ENCODE measurements at regions of chr3 and their contacts with region 1.

Region 1: DNA sequence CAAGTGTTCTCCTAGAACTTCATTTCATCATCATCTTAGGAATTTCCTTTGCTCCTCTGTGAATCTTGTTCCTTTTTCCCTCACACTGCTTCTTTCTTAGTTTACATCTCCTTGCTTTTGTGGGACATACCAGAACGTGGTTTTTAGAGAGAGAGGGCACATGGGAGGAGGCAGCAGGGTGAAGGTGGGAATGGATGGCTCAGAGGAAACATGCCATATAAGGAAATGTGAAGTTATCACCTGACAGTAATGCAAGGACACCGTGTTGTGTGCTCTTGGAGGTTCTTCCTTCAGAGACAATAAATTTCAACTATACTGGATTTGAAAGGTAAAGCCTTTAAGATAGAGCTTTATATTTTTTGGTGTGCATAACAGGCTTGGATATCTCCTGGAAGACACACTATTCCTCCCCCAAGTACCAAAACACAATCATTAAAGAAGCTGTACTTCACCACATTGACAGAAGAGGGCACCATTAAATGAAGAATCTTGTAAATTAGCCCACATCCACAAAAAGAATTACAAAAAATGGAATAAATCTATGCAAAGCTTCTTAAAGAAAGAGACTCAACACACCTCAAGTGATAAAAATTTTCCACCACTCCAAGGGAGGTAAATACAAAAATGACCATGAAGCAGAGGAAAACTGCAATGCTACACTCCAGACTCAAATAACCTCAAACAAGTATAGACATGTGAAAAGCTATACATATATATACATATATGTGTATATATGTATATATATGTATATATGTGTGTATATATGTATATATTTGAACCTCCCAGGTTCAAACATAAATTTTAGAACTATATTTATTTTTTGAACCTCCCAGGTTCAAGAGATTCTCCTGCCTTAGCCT is 26.1 kb downstream of the RPL39L start:
- DNase-seq: peak in 2 of 5 donors; percentile 24 to 47
- H3K4me3 ChIP-seq: no peak overlapping the region
- H3K4me3 Mint-ChIP-seq: no peak overlapping the region
- H3K27ac ChIP-seq: no peak overlapping the region
- H3K27ac Mint-ChIP-seq: no peak overlapping the region
- H3K4me1 ChIP-seq: no peaks in the 10 kb centered on the region
- H3K4me1 Mint-ChIP-seq: peaks cover 3 to 8% (median 7%) of the 10 kb centered on the region in 3 donors
- H3K27me3 ChIP-seq: no peaks in the 10 kb centered on the region
- H3K27me3 Mint-ChIP-seq: peaks cover 0 to 4% of the 10 kb centered on the region in 2 donors

Region 2: GRCh38 chr3:187101184-187102072 is 11.7 kb before region 1 on chr3:
- CTCF ChIA-PET with region 1: interaction called, 20 read pairs
- POLR2A ChIA-PET with region 1: no interaction called
- DNase-seq: peak; percentile 27 to 68 (median 40)
- H3K4me3 ChIP-seq: peak overlapping the region; percentile 43
- H3K4me3 Mint-ChIP-seq: peak overlapping the region; percentile 17 to 86 (median 74)
- H3K27ac ChIP-seq: no peak overlapping the region
- H3K27ac Mint-ChIP-seq: peak overlapping the region; percentile 11 to 89 (median 56)
- H3K4me1 ChIP-seq: peaks cover 18% of the 10 kb centered on the region
- H3K4me1 Mint-ChIP-seq: peaks cover 17 to 40% (median 27%) of the 10 kb centered on the region in 3 donors
- H3K27me3 ChIP-seq: no peaks in the 10 kb centered on the region
- H3K27me3 Mint-ChIP-seq: no peaks in the 10 kb centered on the region

Region 3: GRCh38 chr3:187130346-187131066 is 17.3 kb after region 1 on chr3:
- CTCF ChIA-PET with region 1: interaction called, 17 read pairs
- POLR2A ChIA-PET with region 1: no interaction called
- DNase-seq: peak in 4 of 5 donors; percentile 20 to 81 (median 67)
- H3K4me3 ChIP-seq: peak overlapping the region; percentile 44
- H3K4me3 Mint-ChIP-seq: peak overlapping the region; percentile 2 to 80 (median 74)
- H3K27ac ChIP-seq: peak overlapping the region; percentile 68
- H3K27ac Mint-ChIP-seq: peak overlapping the region; percentile 93 to 99 (median 98)
- H3K4me1 ChIP-seq: peaks cover 24% of the 10 kb centered on the region
- H3K4me1 Mint-ChIP-seq: peaks cover 25 to 51% (median 28%) of the 10 kb centered on the region in 3 donors
- H3K27me3 ChIP-seq: no peaks in the 10 kb centered on the region
- H3K27me3 Mint-ChIP-seq: no peaks in the 10 kb centered on the region

Region 4: DNA sequence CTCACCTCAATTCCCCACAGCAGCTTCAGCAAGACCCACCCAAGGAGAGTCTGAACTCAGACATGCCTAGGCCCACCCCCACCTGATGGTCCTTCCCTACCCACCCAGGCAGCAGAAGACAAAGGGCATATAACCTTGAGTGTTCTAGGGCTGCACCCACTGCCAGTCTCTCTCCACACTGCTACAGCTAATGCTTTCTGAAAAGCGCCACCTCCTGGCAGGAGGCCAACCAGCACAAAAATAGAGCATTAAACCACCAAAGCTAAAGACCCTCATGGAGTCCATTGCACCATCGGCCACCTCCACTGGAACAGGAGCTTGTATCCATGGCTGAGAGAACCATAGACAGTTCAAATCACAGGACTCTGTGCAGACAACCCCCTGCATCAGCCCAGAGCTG is 37.4 kb after region 1 on chr3:
- CTCF ChIA-PET with region 1: interaction called, 81 read pairs
- POLR2A ChIA-PET with region 1: interaction called, 5 read pairs
- DNase-seq: peak; percentile 47 to 79 (median 56)
- H3K4me3 ChIP-seq: no peak overlapping the region
- H3K4me3 Mint-ChIP-seq: no peak overlapping the region
- H3K27ac ChIP-seq: no peak overlapping the region
- H3K27ac Mint-ChIP-seq: peak overlapping the region in 1 of 8 donors; percentile 54
- H3K4me1 ChIP-seq: no peaks in the 10 kb centered on the region
- H3K4me1 Mint-ChIP-seq: peaks cover 0 to 5% (median 4%) of the 10 kb centered on the region in 3 donors
- H3K27me3 ChIP-seq: no peaks in the 10 kb centered on the region
- H3K27me3 Mint-ChIP-seq: peaks cover 19 to 27% of the 10 kb centered on the region in 2 donors

Region 5: DNA sequence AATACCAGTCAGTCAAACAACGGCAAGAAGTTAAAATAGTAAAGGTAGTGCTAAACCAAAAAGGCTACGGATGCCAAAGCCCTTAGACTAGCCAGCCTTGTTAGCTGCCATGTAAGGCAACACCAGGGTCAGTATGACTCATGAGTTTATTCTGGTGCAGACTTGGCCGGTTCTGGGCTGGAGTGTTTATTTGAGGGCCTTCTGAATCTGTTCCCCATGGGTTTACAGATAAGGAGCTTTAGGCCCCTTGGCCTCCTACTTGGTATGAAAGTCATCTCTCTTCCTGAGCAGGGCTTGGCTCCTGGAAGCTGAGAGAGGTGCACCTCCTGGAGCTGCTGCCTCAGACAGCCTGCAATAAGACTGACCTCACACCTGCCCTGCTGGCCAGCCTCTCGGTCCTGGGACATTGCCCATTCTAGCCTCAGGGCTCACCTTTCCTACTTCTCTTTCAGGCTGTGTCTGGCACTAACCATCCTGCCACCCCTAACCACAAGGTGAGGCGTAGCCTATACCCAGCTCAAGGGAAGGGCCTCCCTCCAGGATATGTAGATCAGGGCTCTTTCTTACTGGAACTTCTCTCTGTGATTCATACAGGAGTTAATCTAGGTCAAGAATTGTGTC is 73.7 kb after region 1 on chr3:
- CTCF ChIA-PET with region 1: no interaction called
- POLR2A ChIA-PET with region 1: no interaction called
- DNase-seq: no peak
- H3K4me3 ChIP-seq: no peak overlapping the region
- H3K4me3 Mint-ChIP-seq: no peak overlapping the region
- H3K27ac ChIP-seq: no peak overlapping the region
- H3K27ac Mint-ChIP-seq: no peak overlapping the region
- H3K4me1 ChIP-seq: no peaks in the 10 kb centered on the region
- H3K4me1 Mint-ChIP-seq: peaks cover 0 to 4% (median 3%) of the 10 kb centered on the region in 3 donors
- H3K27me3 ChIP-seq: no peaks in the 10 kb centered on the region
- H3K27me3 Mint-ChIP-seq: peaks cover 18 to 59% of the 10 kb centered on the region in 2 donors

Measured in CD8-positive, alpha-beta memory T cell (primary cell).